ENCODE measurements at regions of chr1 and their contacts with region 1.

Region 1: DNA sequence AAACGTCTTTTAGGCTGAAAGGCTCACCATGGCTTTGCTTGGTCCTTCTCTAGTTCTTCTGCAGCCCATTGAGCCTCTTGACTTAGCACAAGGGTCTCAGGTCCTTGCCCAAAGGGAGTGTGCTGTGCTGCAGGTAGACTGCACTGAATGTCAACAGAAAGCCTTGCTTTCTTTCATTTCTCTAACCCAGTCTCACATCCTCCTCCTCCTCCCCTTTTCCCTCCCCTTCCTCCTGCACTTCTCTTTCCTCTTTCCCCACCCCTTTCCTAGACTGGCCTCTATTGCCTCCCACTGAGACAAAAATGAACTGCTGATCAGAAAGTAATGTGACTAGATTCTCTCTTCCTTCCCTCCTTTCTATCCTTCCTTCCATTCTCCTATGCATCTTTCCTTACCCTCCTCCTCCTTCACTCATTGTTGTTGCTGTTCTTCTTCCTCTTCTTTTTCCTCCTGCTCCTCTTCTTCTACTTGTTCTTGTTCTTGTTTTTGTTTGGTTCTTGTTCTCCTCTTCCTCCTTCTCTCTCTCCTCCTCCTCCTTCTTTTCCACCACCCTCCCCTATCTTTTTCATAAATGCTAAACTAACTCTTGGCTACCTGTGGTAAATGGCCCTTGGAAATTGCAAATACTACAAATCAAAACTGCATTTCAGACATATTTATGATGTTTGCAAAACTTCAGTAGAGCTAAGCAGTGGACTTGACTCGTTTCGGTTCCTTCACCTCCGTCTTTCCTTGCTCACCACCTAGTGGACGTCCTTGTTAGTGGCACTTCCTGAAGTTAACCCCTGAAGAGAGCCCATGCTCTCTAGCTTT is at the start of gene SELL:
- DNase-seq: peak; percentile 86
- H3K4me3 ChIP-seq: peak within 1 kb of the TSS in 1 of 3 experiments; percentile 42
- H3K27ac ChIP-seq: no peak within 1 kb of the TSS
- H3K4me1 ChIP-seq: no peaks in the 10 kb centered on the region
- H3K27me3 ChIP-seq: peaks cover 0 to 6% of the 10 kb centered on the region in 2 experiments
- CTCF ChIP-seq: peak; percentile 77 to 82
- POLR2A ChIP-seq: no peak
- total RNA-seq, gene SELL: 0.67 and 1.8 TPM in 2 replicates

Region 2: DNA sequence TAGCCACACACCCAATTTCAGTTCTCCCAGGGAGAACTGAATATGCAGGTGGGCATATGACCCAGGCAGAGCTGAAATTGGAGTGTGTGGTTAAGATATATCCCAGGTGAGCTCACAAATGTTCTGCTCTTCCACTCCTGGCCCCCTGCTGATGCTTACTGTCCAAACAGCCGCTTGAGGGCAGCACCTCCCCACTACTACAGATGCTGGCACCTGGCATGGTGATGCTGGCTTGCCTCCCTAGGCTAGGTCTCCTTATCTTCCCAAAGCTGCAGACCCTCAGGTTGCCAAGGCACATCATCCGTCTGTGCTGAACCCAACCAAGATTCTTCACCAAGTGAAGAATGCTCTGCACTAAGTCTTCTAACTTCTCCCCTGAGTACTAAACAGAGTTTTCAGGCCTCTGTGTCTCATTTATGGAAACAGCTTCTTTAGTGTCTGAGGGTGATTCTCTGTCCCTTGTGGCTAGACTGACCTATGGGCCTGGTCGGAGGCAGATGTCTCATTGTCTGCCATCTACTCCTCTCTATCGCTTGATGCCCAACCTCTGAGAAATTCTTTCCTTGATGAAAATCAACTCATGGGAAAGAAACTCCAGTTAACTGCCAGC is 1108.1 kb before region 1 on chr1:
- CTCF ChIA-PET with region 1: interaction called, 12 read pairs
- POLR2A ChIA-PET with region 1: no interaction called
- dilution Hi-C with region 1: no loop called
- intact Hi-C with region 1: loop called (anchors 10 kb)
- DNase-seq: peak; percentile 54
- H3K4me3 ChIP-seq: no peak overlapping the region
- H3K27ac ChIP-seq: no peak overlapping the region
- H3K4me1 ChIP-seq: no peaks in the 10 kb centered on the region
- H3K27me3 ChIP-seq: no peaks in the 10 kb centered on the region
- CTCF ChIP-seq: peak; percentile 70 to 77
- POLR2A ChIP-seq: no peak

Region 3: GRCh38 chr1:169586395-169587255 is 125.0 kb before region 1 on chr1 and contains the start of gene F5:
- CTCF ChIA-PET with region 1: interaction called, 93 read pairs
- POLR2A ChIA-PET with region 1: no interaction called
- dilution Hi-C with region 1: no loop called
- intact Hi-C with region 1: loop called (anchors 1 kb)
- DNase-seq: peak; percentile 61
- H3K4me3 ChIP-seq: no peak within 1 kb of the TSS
- H3K27ac ChIP-seq: no peak within 1 kb of the TSS
- H3K4me1 ChIP-seq: no peaks in the 10 kb centered on the region
- H3K27me3 ChIP-seq: peaks cover 0 to 4% of the 10 kb centered on the region in 2 experiments
- CTCF ChIP-seq: peak; percentile 43 to 79
- POLR2A ChIP-seq: no peak
- total RNA-seq, gene F5: not detected in 2 replicates

Region 4: DNA sequence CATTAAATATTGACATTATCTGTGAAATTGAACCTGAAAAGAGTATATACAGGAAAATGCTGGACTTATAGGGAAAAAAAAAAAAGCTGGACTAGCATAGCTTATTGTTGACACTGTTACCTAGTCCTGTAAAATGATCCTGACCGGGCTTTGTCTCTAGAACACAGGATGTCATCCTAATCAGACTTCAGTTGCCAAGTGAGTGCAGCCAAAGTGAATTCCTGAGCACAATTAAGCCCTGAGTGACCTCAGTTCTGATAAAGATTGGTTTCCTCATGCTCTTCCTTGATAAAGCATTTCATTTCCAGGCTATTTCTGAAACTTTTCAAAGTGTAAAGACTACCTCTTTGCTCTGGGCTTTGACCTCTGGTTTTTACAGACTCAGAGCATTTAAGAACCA is 101.6 kb before region 1 on chr1:
- CTCF ChIA-PET with region 1: interaction called, 230 read pairs
- POLR2A ChIA-PET with region 1: no interaction called
- dilution Hi-C with region 1: no loop called
- intact Hi-C with region 1: no loop called
- DNase-seq: peak; percentile 82
- H3K4me3 ChIP-seq: no peak overlapping the region
- H3K27ac ChIP-seq: peak overlapping the region; percentile 20
- H3K4me1 ChIP-seq: peaks cover 13% of the 10 kb centered on the region
- H3K27me3 ChIP-seq: no peaks in the 10 kb centered on the region
- CTCF ChIP-seq: no peak
- POLR2A ChIP-seq: no peak

Region 5: DNA sequence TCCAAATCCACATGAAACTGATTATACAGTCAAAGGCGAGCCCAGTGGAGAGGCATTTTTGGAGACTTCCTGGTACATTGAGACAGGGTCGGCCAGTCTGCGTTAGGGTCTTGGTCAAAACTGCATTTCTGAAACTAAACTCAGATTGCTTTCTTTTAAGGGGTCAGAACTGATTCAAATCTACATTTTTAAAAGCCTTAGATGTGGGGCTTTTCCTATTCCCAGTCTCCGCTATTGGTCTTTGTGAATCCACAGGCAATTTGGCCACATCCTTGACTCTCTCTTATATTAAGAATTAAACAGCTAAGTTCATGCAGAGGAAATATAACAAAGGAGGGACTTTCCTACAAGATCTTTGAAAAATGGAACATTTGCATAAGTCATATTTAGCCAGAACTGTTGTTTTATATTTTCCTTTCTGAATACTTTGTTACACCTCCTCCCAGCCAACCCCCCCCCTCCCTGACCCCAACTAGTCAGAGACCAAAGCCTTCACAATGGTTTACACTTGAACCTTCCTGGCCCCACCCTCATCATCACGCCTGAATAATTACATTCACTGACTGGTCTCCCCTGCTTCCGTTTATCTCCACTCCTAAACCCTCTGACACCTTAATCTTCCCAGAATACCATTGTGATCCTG is 31.2 kb before region 1 on chr1:
- CTCF ChIA-PET with region 1: interaction called, 15 read pairs
- POLR2A ChIA-PET with region 1: no interaction called
- dilution Hi-C with region 1: no loop called
- intact Hi-C with region 1: loop called (anchors 1 kb)
- DNase-seq: no peak
- H3K4me3 ChIP-seq: no peak overlapping the region
- H3K27ac ChIP-seq: no peak overlapping the region
- H3K4me1 ChIP-seq: peaks cover 12% of the 10 kb centered on the region
- H3K27me3 ChIP-seq: no peaks in the 10 kb centered on the region
- CTCF ChIP-seq: no peak
- POLR2A ChIP-seq: no peak

Region 6: DNA sequence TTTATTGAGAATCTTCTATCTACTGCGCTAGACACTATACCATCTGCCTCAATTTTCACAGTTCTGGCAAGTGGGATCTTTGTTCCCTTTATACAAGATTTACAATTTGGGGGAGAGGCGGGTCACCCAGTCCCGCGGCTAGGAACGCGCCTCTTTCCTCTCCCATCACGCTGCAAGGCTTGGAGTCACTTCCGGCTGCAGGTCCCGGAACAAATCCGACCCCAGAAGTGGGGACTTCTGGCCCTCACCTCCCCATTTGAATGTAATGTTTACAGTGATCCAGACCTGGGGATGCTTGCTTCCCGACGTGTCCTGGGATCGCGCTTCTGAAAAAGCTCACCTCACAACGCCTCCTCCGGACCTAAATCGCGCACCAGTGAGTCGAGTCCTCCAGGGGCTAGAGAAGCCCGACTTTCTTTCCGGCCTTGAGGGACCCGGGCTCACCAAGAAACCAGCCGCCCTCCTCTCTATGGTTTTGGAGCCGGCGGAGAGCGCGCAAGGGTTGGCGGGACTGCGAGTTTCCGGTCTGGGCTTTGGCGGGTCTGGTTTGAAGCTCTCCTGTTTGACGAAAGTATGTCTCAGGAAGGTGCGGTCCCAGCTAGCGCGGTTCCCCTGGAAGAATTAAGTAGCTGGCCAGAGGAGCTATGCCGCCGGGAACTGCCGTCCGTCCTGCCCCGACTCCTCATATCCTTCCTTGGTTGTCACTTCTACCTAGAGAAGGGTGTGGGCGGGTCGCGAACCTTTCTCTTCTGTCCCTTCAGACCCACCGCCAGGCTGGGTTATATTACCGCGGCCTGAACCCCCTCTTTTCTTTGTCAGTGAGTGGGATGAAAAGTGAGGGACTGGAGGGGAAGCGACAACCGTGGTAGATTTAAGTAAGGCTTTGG is 83.1 kb after region 1 on chr1 and contains the start of gene METTL18:
- CTCF ChIA-PET with region 1: interaction called, 18 read pairs
- POLR2A ChIA-PET with region 1: no interaction called
- dilution Hi-C with region 1: no loop called
- intact Hi-C with region 1: no loop called
- DNase-seq: peak; percentile 97
- H3K4me3 ChIP-seq: peak within 1 kb of the TSS; percentile 29 to 92 (median 77)
- H3K27ac ChIP-seq: peak within 1 kb of the TSS; percentile 66
- H3K4me1 ChIP-seq: peaks cover 11% of the 10 kb centered on the region
- H3K27me3 ChIP-seq: no peaks in the 10 kb centered on the region
- CTCF ChIP-seq: peak in 1 of 2 donors; percentile 48
- POLR2A ChIP-seq: peak; percentile 56
- total RNA-seq, gene METTL18: 6.6 TPM in 2 replicates

Region 7: DNA sequence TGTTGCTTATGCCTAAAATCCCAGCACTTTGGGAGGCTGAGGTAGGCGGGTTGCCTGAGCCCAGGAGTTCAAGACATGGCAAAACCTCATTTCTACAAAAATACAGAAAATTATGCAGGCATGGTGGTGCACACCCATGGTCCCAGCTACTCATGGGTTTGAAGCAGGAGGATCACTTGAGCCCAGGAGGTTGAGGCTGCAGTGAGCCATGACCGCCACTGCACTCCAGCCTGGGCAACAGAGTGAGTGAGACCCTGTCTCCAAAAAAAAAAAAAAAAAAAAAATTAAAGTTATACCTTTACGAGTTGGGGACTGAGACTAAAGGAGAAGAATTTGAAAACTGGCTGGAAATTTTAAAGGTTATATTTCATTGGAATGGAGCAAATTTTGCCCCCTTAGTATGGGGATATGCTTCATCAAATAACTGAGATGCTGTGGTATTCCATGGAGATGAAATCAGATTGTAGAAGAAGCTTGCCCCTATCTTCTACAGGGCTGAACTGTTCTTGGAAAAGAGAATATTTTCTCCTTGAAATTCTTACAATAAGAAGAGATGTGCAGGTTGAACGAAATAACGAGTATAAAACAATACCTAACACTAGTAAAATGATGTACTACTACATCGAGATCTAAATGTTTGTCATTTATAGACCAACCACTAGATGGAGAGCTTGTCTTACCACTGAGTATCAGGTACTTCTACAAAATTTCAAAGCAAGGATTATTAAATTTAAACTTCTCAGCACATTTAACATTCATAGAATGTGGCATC is 216.9 kb after region 1 on chr1:
- CTCF ChIA-PET with region 1: no interaction called
- POLR2A ChIA-PET with region 1: no interaction called
- dilution Hi-C with region 1: no loop called
- intact Hi-C with region 1: no loop called
- DNase-seq: peak; percentile 55
- H3K4me3 ChIP-seq: no peak overlapping the region
- H3K27ac ChIP-seq: no peak overlapping the region
- H3K4me1 ChIP-seq: no peaks in the 10 kb centered on the region
- H3K27me3 ChIP-seq: no peaks in the 10 kb centered on the region
- CTCF ChIP-seq: peak; percentile 30 to 49
- POLR2A ChIP-seq: no peak

Region 8: GRCh38 chr1:169999331-169999741 is 287.7 kb after region 1 on chr1:
- CTCF ChIA-PET with region 1: no interaction called
- POLR2A ChIA-PET with region 1: no interaction called
- dilution Hi-C with region 1: no loop called
- intact Hi-C with region 1: no loop called
- DNase-seq: peak; percentile 64
- H3K4me3 ChIP-seq: no peak overlapping the region
- H3K27ac ChIP-seq: no peak overlapping the region
- H3K4me1 ChIP-seq: peaks cover 9% of the 10 kb centered on the region
- H3K27me3 ChIP-seq: no peaks in the 10 kb centered on the region
- CTCF ChIP-seq: no peak
- POLR2A ChIP-seq: no peak